ENCODE measurements at regions of chr16 and their contacts with region 1.

Region 1: GRCh38 chr16:1705688-1706385 is at the start of gene MAPK8IP3:
- DNase-seq: peak; percentile 90
- H3K4me3 Mint-ChIP-seq: peak within 1 kb of the TSS; percentile 96
- H3K27ac Mint-ChIP-seq: peak within 1 kb of the TSS; percentile 99
- H3K4me1 Mint-ChIP-seq: peaks cover 36% of the 10 kb centered on the region
- H3K27me3 Mint-ChIP-seq: no peaks in the 10 kb centered on the region
- total RNA-seq, gene MAPK8IP3: 101 to 108 TPM

Region 2: DNA sequence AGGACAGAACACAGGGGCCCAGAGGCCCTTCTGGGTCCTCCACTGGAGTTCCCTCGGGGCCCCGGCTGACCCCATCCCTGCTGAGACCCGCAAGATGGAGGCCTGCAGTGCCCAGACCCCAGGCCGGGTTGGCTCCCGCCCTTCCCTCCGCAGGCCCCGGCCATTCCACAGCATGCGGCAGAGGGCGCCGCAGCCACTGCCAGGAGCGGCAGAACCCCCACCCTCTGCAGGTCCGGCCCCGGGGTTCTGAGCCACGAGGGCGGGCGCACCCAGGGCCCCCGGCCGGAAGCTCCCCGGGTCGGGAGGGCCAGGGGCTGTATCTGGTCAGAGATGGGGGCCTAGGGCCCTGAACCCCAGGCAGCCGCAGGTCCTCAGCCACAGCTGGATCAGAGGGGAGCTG is 277.3 kb before region 1 on chr16:
- CTCF ChIA-PET with region 1: interaction called, 10 read pairs
- POLR2A ChIA-PET with region 1: no interaction called
- DNase-seq: peak; percentile 40
- H3K4me3 Mint-ChIP-seq: no peak overlapping the region
- H3K27ac Mint-ChIP-seq: no peak overlapping the region
- H3K4me1 Mint-ChIP-seq: no peaks in the 10 kb centered on the region
- H3K27me3 Mint-ChIP-seq: no peaks in the 10 kb centered on the region

Region 3: DNA sequence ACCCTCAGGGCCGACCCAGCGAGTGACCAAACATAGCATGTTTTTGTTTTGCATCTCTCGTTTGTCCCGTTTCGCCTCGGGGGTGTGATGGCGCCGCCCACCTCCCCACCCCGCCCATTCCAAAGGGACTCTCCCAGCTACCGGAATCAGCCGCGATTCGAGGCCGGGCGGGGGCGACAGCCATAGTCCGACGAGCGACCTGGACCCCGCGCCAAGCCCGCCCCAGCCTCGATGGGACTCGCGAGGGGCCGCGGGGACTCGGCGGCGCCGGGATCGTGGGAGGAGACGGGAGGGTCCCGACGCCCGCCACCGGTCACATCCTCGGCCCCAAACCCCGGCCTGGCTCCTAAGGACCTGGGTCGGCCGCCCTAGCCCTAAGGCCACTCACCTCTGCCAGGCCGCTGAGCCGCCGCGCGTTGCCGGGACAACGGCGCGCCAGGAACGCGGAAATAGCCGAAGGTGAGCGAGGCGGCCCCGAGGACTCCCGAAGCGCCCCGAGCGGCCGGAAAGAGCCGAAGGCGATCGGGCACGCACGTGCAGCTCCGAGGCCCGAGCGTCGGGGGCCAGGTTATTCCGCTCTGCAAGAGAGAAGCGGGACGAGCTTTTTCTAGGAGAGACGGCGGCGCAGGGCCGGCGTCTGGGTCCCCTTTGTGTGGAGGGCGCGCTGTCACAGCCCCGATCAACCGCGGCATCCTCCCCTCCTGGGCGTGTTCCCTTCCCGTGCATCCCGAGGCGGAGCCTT is 95.4 kb before region 1 on chr16:
- CTCF ChIA-PET with region 1: interaction called, 11 read pairs
- POLR2A ChIA-PET with region 1: no interaction called
- DNase-seq: peak; percentile 91
- H3K4me3 Mint-ChIP-seq: peak overlapping the region; percentile 90
- H3K27ac Mint-ChIP-seq: peak overlapping the region; percentile 100
- H3K4me1 Mint-ChIP-seq: peaks cover 32% of the 10 kb centered on the region
- H3K27me3 Mint-ChIP-seq: no peaks in the 10 kb centered on the region

Region 4: GRCh38 chr16:1620391-1620790 is 85.4 kb before region 1 on chr16:
- CTCF ChIA-PET with region 1: interaction called, 10 read pairs
- POLR2A ChIA-PET with region 1: no interaction called
- DNase-seq: no peak
- H3K4me3 Mint-ChIP-seq: no peak overlapping the region
- H3K27ac Mint-ChIP-seq: no peak overlapping the region
- H3K4me1 Mint-ChIP-seq: peaks cover 23% of the 10 kb centered on the region
- H3K27me3 Mint-ChIP-seq: no peaks in the 10 kb centered on the region

Region 5: DNA sequence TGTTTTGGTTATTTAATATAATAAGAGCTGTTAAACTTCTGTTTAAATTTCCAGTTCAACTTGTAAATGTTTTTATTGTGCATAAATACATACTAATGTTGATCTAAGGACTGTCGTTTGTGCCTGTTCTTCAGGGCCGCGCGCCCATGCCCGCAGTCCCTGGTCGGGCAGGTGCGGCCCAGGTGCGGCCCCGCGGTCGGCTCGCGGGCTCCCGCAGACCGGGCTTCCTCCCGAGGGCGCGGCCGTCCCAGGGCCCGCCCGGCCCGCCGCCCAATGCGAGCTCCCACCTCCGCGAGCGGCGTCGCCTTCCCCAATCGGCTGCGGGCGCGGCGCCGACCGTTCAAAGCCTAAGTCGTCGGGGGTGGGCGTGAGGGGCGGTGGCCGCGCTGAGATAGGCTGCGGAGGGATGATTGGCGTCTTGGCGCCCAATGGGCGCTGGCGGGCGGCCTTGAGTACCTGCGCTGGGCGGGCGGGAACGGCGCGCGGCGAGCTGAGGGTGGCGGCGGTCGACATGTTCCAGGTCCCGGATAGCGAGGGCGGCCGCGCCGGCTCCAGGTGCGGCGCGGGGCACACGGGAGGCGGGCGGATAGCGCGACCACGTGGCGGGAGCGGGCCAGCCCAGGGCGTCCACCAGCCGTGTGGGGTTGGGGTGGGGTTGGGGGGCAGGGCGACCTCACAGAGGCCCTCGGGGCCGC is 27.9 kb before region 1 on chr16 and contains the start of gene JPT2:
- CTCF ChIA-PET with region 1: interaction called, 13 read pairs
- POLR2A ChIA-PET with region 1: interaction called, 7 read pairs
- DNase-seq: peak; percentile 96
- H3K4me3 Mint-ChIP-seq: peak within 1 kb of the TSS; percentile 82
- H3K27ac Mint-ChIP-seq: peak within 1 kb of the TSS; percentile 85
- H3K4me1 Mint-ChIP-seq: peaks cover 43% of the 10 kb centered on the region
- H3K27me3 Mint-ChIP-seq: no peaks in the 10 kb centered on the region
- total RNA-seq, gene JPT2: 56.5 to 65.2 TPM

Region 6: GRCh38 chr16:1691276-1691675 is 14.6 kb before region 1 on chr16:
- CTCF ChIA-PET with region 1: interaction called, 20 read pairs
- POLR2A ChIA-PET with region 1: interaction called, 3 read pairs
- DNase-seq: no peak
- H3K4me3 Mint-ChIP-seq: no peak overlapping the region
- H3K27ac Mint-ChIP-seq: no peak overlapping the region
- H3K4me1 Mint-ChIP-seq: peaks cover 4% of the 10 kb centered on the region
- H3K27me3 Mint-ChIP-seq: no peaks in the 10 kb centered on the region

Region 7: GRCh38 chr16:1782352-1783091 is 76.7 kb after region 1 on chr16 and contains the starts of genes NUBP2 and SPSB3:
- CTCF ChIA-PET with region 1: interaction called, 13 read pairs
- POLR2A ChIA-PET with region 1: interaction called, 3 read pairs
- DNase-seq: peak; percentile 100
- H3K4me3 Mint-ChIP-seq: peak within 1 kb of the TSS; percentile 89
- H3K27ac Mint-ChIP-seq: peak within 1 kb of the TSS; percentile 93
- H3K4me1 Mint-ChIP-seq: peaks cover 25% of the 10 kb centered on the region
- H3K27me3 Mint-ChIP-seq: no peaks in the 10 kb centered on the region
- total RNA-seq, gene NUBP2: 40.2 to 53.8 TPM
- total RNA-seq, gene SPSB3: 38.0 to 42.9 TPM

Measured in activated CD4-positive, alpha-beta T cell treated with anti-CD3 and anti-CD28 coated beads, Interleukin-2, amount 10 ng/mL, durations not matched to agents 7 days and 5 days (primary cell).